Caki2 (cell line): ENCODE measurements at regions of chr22 and their contacts with region 1.

Region 1: GRCh38 chr22:33438273-33438672 is 380.1 kb upstream of the SYN3 start:
- DNase-seq: peak; percentile 98

Region 2: GRCh38 chr22:33341611-33342010 is 96.7 kb before region 1 on chr22:
- in situ Hi-C with region 1: loop called (anchors 5 kb)
- DNase-seq: no peak